Upper lobe of right lung (tissue), 1 donor: ENCODE measurements at regions of chr2 and their contacts with region 1.

Region 1: DNA sequence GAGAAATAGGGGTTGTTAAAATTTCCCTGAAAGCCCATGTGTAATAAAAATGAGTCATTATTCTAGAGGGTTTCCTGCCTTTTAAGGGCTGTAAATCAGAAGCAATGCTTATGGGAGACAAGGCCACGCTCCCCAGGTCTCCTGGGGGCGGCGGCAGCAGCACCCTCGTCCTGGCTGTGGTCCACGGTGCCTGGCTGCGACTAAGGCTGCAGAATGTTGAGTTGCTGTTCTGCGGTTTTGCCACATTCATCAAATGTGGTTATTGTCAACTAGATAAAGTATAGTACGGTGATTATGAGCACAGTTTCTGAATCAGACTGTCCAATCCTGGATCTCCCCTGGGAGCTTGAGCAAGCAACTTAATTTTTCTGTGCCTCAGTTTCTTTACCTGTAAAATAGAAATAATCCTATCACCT is 11.9 kb upstream of the AGFG1 start:
- DNase-seq: no peak
- ATAC-seq: no peak
- H3K4me3 ChIP-seq: no peak overlapping the region
- H3K27ac ChIP-seq: no peak overlapping the region
- H3K4me1 ChIP-seq: peaks cover 5% of the 10 kb centered on the region
- H3K27me3 ChIP-seq: no peaks in the 10 kb centered on the region
- CTCF ChIP-seq: no peak

Region 2: DNA sequence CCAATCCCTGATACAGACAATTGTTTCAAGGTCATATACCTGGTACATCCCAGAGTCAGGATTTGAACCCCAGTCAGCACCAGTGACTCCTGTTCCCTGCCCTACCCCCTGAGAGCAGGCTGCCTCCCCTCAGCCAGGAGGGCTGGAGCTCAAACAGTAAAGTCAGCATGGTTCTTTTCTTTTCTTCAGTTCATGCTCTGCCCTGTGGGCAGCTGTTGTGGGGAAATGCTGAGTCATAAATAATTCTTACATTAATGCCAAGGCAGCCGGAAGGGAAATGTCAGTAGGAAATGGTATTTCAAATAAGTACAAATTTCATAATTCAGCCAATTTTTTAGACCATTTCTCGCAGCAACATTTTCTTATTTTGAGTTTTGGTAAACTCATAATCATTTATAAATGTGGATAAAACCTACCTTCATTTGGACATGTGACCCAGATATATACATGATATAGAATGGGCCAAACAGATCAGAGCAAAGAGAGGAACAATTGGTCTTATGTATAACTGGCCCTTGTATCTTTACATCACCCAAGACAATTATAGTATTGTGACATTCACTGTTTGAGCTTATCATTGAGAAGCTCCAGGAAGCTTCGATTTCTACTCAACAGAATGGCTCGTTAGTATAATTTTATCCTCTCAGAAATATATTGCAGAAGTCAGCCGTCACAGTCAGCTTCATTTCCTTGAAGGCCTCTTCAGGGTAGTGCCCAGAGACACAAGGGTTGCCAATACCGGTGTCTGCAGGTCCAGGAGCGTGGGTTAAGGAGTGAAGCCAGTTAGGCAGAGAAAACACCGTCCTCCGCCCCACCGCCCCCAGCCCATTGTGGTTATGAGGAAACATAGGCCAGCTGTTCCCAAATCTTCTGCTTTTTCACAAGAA is 44.3 kb before region 1 on chr2:
- intact Hi-C with region 1: loop called (anchors 10 kb)
- DNase-seq: peak; percentile 81
- ATAC-seq: peak; percentile 86
- H3K4me3 ChIP-seq: no peak overlapping the region
- H3K27ac ChIP-seq: peak overlapping the region; percentile 68
- H3K4me1 ChIP-seq: peaks cover 8% of the 10 kb centered on the region
- H3K27me3 ChIP-seq: no peaks in the 10 kb centered on the region
- CTCF ChIP-seq: no peak